ENCODE measurements at regions of chr19 and their contacts with region 1.

Region 1: DNA sequence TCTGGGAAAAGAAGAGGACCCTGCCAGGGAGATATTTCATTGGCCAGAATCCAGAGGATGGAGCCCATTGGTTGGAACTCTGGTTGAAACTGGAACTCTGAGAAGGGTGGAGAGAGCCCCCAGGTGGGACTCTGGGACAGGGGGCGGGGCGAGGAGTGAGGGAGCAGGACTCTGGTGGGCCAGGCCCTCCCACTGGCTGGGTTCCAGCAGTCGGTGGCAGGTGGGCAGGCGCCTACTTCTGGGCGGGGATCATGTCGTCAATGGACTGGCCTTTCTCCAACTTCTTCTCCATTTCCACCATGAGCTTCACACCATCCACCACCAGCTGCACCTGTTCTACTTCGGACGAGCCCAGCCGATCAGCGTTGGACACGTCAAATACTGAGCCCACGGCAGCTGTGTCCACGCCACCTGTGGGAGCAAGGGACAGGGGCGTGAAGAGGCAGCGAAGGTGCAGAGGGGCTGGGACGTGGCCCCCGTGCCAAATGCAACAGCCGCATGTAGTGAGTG is 16.1 kb downstream of the CKM start:
- DNase-seq: peak; percentile 70
- H3K4me3 ChIP-seq: no peak overlapping the region
- H3K27ac ChIP-seq: no peak overlapping the region
- H3K4me1 ChIP-seq: peaks cover 4% of the 10 kb centered on the region
- H3K27me3 ChIP-seq: no peaks in the 10 kb centered on the region
- CTCF ChIP-seq: no peak

Region 2: GRCh38 chr19:44741258-44741731 is 565.3 kb before region 1 on chr19:
- CTCF ChIA-PET with region 1: no interaction called
- POLR2A ChIA-PET with region 1: interaction called, 10 read pairs
- intact Hi-C with region 1: no loop called
- DNase-seq: no peak
- H3K4me3 ChIP-seq: no peak overlapping the region
- H3K27ac ChIP-seq: peak overlapping the region; percentile 57
- H3K4me1 ChIP-seq: peaks cover 29% of the 10 kb centered on the region
- H3K27me3 ChIP-seq: no peaks in the 10 kb centered on the region
- CTCF ChIP-seq: no peak

Region 3: DNA sequence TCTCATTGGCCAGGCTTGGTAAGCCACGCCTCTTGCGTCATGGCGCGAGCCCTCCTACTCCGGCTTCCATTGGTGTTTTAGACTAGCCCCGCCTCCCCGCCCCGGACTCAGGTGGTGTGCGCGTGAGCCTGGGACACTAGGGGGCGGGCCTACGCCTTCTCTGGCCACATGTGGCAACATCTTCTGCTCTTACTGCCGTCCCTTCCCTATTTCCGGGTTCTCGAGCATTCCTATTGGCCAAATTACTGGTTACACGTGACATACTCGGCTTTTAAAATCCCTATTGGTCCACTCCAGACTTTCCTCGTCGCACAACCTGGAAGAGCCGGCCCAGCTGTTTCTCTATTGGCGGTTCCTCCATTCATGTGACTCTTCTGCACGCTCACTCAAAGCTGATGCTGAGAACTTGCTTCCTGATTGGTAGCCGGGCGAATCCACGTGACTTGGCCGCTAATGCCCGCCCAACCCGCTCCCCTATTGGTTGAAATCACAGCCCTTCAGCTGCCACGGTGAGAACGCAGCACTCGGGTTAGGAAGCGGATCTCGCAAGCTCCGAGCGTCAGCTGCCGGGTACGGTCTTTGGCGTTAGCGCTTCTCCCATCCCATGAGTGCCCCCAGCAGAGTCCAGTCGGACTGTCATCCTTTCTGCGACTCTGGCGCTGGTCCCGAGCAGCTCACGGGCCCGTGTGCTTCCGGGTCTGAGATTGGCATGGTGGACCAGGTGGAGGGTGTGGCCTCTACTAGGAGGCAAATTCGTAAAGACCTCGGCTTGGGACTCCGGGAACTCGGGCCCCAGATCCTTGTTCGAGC is 128.1 kb before region 1 on chr19 and contains the start of gene BLOC1S3:
- CTCF ChIA-PET with region 1: no interaction called
- POLR2A ChIA-PET with region 1: interaction called, 20 read pairs
- intact Hi-C with region 1: no loop called
- DNase-seq: peak; percentile 100
- H3K4me3 ChIP-seq: peak within 1 kb of the TSS; percentile 77
- H3K27ac ChIP-seq: peak within 1 kb of the TSS; percentile 73
- H3K4me1 ChIP-seq: peaks cover 7% of the 10 kb centered on the region
- H3K27me3 ChIP-seq: no peaks in the 10 kb centered on the region
- CTCF ChIP-seq: peak; percentile 51
- total RNA-seq, gene BLOC1S3: 8.7 and 9.1 TPM in 2 replicates

Region 4: GRCh38 chr19:45340232-45340898 is 33.8 kb after region 1 on chr19 and contains the start of gene KLC3:
- CTCF ChIA-PET with region 1: interaction called, 10 read pairs
- POLR2A ChIA-PET with region 1: no interaction called
- intact Hi-C with region 1: no loop called
- DNase-seq: no peak
- H3K4me3 ChIP-seq: peak within 1 kb of the TSS; percentile 48
- H3K27ac ChIP-seq: no peak within 1 kb of the TSS
- H3K4me1 ChIP-seq: peaks cover 5% of the 10 kb centered on the region
- H3K27me3 ChIP-seq: no peaks in the 10 kb centered on the region
- CTCF ChIP-seq: no peak
- total RNA-seq, gene KLC3: 0.44 and 0.49 TPM in 2 replicates

Measured in A673 (cell line).